ENCODE measurements at regions of chr14 and their contacts with region 1.

Region 1: DNA sequence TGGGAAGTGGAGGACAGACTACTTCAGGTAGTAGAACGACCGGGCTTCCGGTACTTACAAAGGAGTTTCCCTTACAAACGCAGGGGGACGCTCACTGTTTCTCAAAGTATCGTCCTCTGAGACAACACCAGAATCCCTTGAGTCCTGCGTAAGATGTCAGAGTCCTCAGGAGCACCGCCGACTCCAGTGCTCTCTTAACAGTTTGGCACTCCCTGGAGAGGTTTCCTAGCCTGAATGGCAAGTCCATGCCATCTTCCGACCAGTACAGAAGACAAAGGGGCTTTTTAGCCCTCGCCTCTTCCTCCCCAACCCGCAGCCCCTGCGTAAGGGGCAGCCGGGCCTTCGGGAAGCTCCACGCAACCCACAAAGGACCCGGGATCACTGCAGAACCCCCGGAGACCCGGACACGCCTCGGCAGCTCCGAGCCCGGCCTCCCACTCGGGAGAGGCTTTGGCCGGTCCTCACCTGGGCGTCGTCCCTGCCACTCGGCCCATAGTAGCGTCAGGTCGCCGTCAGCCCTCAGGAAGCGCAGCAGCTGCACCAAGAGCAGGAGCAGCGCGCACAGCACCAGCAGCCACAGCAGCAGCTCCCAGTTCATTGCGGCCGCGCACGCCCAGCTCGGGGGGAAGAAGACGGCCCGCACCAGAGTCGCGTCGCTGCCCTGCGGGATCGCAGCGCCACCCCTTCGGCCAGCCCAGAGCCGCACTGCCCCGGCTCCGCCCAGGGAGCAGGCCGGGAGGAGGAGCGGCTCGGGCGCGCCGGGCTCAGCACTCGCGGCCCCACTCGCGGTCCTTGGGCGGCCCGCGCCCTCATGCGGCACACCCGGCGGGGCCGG is at the start of gene DHRS7:
- DNase-seq: peak; percentile 68
- H3K4me3 Mint-ChIP-seq: peak within 1 kb of the TSS; percentile 91
- H3K27ac Mint-ChIP-seq: peak within 1 kb of the TSS; percentile 94
- H3K4me1 Mint-ChIP-seq: peaks cover 35% of the 10 kb centered on the region
- H3K27me3 Mint-ChIP-seq: no peaks in the 10 kb centered on the region
- total RNA-seq, gene DHRS7: 76.5 to 77.9 TPM

Region 2: GRCh38 chr14:59964251-59965007 is 200.5 kb before region 1 on chr14:
- CTCF ChIA-PET with region 1: interaction called, 35 read pairs
- POLR2A ChIA-PET with region 1: interaction called, 9 read pairs
- DNase-seq: no peak
- H3K4me3 Mint-ChIP-seq: no peak overlapping the region
- H3K27ac Mint-ChIP-seq: no peak overlapping the region
- H3K4me1 Mint-ChIP-seq: peaks cover 10% of the 10 kb centered on the region
- H3K27me3 Mint-ChIP-seq: peaks cover 14% of the 10 kb centered on the region

Region 3: GRCh38 chr14:60064491-60065072 is 100.3 kb before region 1 on chr14:
- CTCF ChIA-PET with region 1: interaction called, 17 read pairs
- POLR2A ChIA-PET with region 1: no interaction called
- DNase-seq: no peak
- H3K4me3 Mint-ChIP-seq: no peak overlapping the region
- H3K27ac Mint-ChIP-seq: no peak overlapping the region
- H3K4me1 Mint-ChIP-seq: no peaks in the 10 kb centered on the region
- H3K27me3 Mint-ChIP-seq: peaks cover 8% of the 10 kb centered on the region

Region 4: DNA sequence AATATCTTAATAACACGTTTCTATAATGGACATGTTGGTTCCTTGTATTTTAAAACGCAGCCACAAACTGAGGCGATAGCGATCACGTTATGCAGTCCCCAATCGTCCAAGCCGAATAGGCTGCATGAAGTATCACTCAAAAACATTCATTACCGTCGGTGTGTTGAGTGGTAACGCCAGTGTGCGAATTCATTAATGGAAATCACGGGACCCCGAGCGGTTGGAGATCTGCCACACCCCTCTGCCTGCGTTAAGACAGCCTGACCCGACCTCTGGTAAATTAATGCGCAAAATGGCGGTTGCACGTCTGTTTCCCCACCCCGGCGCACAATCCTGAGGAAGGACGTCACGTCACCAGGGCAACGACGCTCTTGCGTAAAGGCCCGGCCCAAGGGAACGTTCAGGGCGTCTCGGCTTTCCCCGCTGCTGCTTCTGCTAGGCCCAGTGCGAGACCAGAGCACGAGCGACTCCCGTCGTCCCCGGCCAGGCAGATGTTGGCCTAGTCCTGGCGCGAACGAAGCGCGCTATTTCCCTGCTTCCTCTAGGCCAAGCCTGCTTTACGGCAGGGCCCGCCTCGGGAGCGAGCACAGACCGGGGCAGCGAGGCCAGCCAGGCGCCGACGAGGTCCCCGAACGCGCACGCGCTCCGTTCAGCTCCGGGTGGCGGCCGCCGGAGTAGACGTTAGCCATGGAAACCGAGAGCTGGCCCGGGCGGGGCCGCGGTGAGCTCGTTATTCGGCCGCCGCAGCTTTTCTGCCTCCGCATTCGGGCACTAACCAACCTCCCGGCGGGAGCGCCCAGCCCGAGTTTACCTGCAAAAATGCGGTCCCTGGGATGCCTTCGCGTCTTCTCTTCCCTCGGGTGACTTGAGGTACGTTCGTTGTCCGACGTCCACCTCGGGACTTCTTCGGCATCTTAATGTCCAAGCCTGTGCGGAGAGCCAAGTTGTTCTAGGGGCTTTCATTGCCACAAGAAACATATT is 73.1 kb before region 1 on chr14 and contains the start of gene PCNX4:
- CTCF ChIA-PET with region 1: interaction called, 7 read pairs
- POLR2A ChIA-PET with region 1: interaction called, 51 read pairs
- DNase-seq: peak; percentile 95
- H3K4me3 Mint-ChIP-seq: peak within 1 kb of the TSS; percentile 94
- H3K27ac Mint-ChIP-seq: peak within 1 kb of the TSS; percentile 96
- H3K4me1 Mint-ChIP-seq: peaks cover 41% of the 10 kb centered on the region
- H3K27me3 Mint-ChIP-seq: no peaks in the 10 kb centered on the region
- total RNA-seq, gene PCNX4: 32.6 to 34.7 TPM

Region 5: GRCh38 chr14:60151715-60152114 is 13.2 kb before region 1 on chr14:
- CTCF ChIA-PET with region 1: interaction called, 6 read pairs
- POLR2A ChIA-PET with region 1: interaction called, 55 read pairs
- DNase-seq: peak; percentile 77
- H3K4me3 Mint-ChIP-seq: no peak overlapping the region
- H3K27ac Mint-ChIP-seq: peak overlapping the region; percentile 81
- H3K4me1 Mint-ChIP-seq: peaks cover 43% of the 10 kb centered on the region
- H3K27me3 Mint-ChIP-seq: no peaks in the 10 kb centered on the region

Region 6: GRCh38 chr14:60184146-60184904 is 19.4 kb after region 1 on chr14:
- CTCF ChIA-PET with region 1: interaction called, 20 read pairs
- POLR2A ChIA-PET with region 1: interaction called, 17 read pairs
- DNase-seq: no peak
- H3K4me3 Mint-ChIP-seq: peak overlapping the region; percentile 45
- H3K27ac Mint-ChIP-seq: peak overlapping the region; percentile 2
- H3K4me1 Mint-ChIP-seq: peaks cover 12% of the 10 kb centered on the region
- H3K27me3 Mint-ChIP-seq: peaks cover 1% of the 10 kb centered on the region